OCI-LY7 (cell line): ENCODE measurements at regions of chr2 and their contacts with region 1.

Region 1: DNA sequence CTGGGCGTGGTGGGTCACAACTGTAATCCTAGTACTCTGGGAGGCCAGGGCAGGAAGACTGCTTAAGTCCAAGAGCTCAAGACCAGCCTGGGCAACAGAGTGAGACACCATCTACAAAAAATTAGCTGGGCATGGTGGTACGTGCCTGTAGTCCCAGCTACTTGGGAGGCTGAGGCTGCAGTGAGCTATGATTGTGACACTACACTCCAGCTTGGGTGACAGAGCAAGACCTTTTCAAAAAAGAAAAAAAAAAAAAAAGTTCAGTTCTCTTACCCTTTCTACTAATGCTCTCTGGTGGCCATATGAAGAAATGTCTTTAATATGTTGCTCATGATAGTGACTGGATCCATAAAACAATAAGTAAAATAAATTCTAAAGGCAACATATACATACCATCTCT is 14.9 kb downstream of the TYW5 start:
- DNase-seq: peak; percentile 53
- H3K4me3 ChIP-seq: no peak overlapping the region
- H3K27ac ChIP-seq: no peak overlapping the region
- H3K4me1 ChIP-seq: no peaks in the 10 kb centered on the region
- CTCF ChIP-seq: peak; percentile 74

Region 2: GRCh38 chr2:199704358-199705238 is 235.8 kb before region 1 on chr2:
- CTCF ChIA-PET with region 1: no interaction called
- POLR2A ChIA-PET with region 1: no interaction called
- intact Hi-C with region 1: loop called (anchors 2 kb)
- DNase-seq: peak; percentile 49
- H3K4me3 ChIP-seq: no peak overlapping the region
- H3K27ac ChIP-seq: no peak overlapping the region
- H3K4me1 ChIP-seq: no peaks in the 10 kb centered on the region
- CTCF ChIP-seq: peak; percentile 80

Region 3: DNA sequence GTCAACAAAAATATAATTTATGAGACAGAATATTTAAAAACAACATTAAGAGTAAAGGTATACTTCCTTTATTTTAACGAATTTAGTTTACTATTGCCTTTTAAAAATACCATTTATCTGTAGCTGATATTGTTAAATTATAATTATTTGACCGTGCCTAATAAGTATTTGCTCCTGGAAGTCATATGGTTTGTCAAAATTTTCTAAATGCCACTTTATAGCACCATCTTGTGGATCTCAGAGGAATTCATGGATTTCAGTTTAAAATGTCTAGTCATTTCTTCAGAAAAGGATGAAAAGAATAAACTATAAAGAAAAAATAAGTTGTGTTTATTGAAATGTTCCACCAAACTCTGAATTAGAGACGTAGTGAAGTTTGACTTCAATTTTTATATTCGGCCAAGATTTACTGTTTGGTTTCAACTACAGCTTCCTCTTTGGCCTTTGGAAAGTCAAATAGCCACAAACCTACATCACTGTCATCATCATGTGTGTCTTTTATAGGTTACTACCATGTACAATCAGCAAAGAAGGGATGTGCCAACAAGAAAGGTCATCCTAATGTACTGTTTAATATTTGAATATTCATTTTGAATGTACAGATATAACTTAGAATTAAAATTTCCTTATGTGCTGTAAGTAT is 79.1 kb before region 1 on chr2:
- CTCF ChIA-PET with region 1: no interaction called
- POLR2A ChIA-PET with region 1: no interaction called
- intact Hi-C with region 1: loop called (anchors 10 kb)
- DNase-seq: peak; percentile 38
- H3K4me3 ChIP-seq: no peak overlapping the region
- H3K27ac ChIP-seq: no peak overlapping the region
- H3K4me1 ChIP-seq: no peaks in the 10 kb centered on the region
- CTCF ChIP-seq: peak; percentile 90

Region 4: GRCh38 chr2:199958014-199958413 is 17.6 kb after region 1 on chr2:
- CTCF ChIA-PET with region 1: no interaction called
- POLR2A ChIA-PET with region 1: no interaction called
- intact Hi-C with region 1: no loop called
- DNase-seq: no peak
- H3K4me3 ChIP-seq: peak overlapping the region; percentile 6
- H3K27ac ChIP-seq: no peak overlapping the region
- H3K4me1 ChIP-seq: peaks cover 29% of the 10 kb centered on the region
- CTCF ChIP-seq: no peak

Region 5: GRCh38 chr2:200095436-200095835 is 155.1 kb after region 1 on chr2:
- CTCF ChIA-PET with region 1: no interaction called
- POLR2A ChIA-PET with region 1: no interaction called
- intact Hi-C with region 1: no loop called
- DNase-seq: no peak
- H3K4me3 ChIP-seq: no peak overlapping the region
- H3K27ac ChIP-seq: no peak overlapping the region
- H3K4me1 ChIP-seq: no peaks in the 10 kb centered on the region
- CTCF ChIP-seq: no peak

Region 6: DNA sequence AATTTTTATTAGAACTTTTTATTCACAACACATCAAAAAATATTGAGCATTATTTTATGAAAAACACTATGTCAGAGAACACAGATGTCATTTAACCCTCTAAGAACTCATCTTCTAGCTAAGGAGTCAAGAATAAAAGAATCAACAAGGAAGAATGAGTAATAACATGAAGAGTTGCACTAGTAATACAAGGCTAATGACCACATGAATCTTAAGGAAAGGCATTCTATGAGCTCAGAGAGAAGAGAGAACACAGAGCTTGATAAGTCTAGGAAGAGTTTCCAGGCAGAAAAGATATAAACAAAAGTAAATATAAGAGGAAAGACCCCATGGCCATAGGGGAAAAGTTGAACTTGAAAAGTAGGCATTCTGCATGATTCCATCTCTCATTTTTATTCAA is 181.6 kb after region 1 on chr2:
- CTCF ChIA-PET with region 1: no interaction called
- POLR2A ChIA-PET with region 1: no interaction called
- intact Hi-C with region 1: no loop called
- DNase-seq: no peak
- H3K4me3 ChIP-seq: no peak overlapping the region
- H3K27ac ChIP-seq: no peak overlapping the region
- H3K4me1 ChIP-seq: no peaks in the 10 kb centered on the region
- CTCF ChIP-seq: no peak